CD4-positive, alpha-beta T cell (primary cell): ENCODE measurements at regions of chr11 and their contacts with region 1.

Region 1: GRCh38 chr11:117946842-117947526 is 17.8 kb upstream of the TMPRSS13 start:
- DNase-seq: peak; percentile 66 to 90 (median 79)
- ATAC-seq: no peak
- H3K4me3 ChIP-seq: no peak overlapping the region
- H3K4me3 Mint-ChIP-seq: peak overlapping the region; percentile 67
- H3K27ac ChIP-seq: no peak overlapping the region
- H3K27ac Mint-ChIP-seq: peak overlapping the region; percentile 86
- H3K4me1 ChIP-seq: peaks cover 69% of the 10 kb centered on the region
- H3K4me1 Mint-ChIP-seq: peaks cover 71% of the 10 kb centered on the region
- H3K27me3 ChIP-seq: no peaks in the 10 kb centered on the region
- H3K27me3 Mint-ChIP-seq: no peaks in the 10 kb centered on the region
- CTCF ChIP-seq: peak; percentile 88

Region 2: GRCh38 chr11:117817368-117818040 is 129.5 kb before region 1 on chr11:
- CTCF ChIA-PET with region 1: interaction called, 12 read pairs
- POLR2A ChIA-PET with region 1: interaction called, 21 read pairs
- intact Hi-C with region 1: loop called in 1 of 2 experiments (anchors 5 kb)
- DNase-seq: peak; percentile 70 to 92 (median 84)
- ATAC-seq: peak; percentile 16
- H3K4me3 ChIP-seq: no peak overlapping the region
- H3K4me3 Mint-ChIP-seq: peak overlapping the region; percentile 38
- H3K27ac ChIP-seq: no peak overlapping the region
- H3K27ac Mint-ChIP-seq: peak overlapping the region; percentile 87
- H3K4me1 ChIP-seq: peaks cover 67% of the 10 kb centered on the region
- H3K4me1 Mint-ChIP-seq: peaks cover 50% of the 10 kb centered on the region
- H3K27me3 ChIP-seq: no peaks in the 10 kb centered on the region
- H3K27me3 Mint-ChIP-seq: no peaks in the 10 kb centered on the region
- CTCF ChIP-seq: peak; percentile 97

Region 3: GRCh38 chr11:117970400-117971024 is 23.5 kb after region 1 on chr11:
- CTCF ChIA-PET with region 1: interaction called, 8 read pairs
- POLR2A ChIA-PET with region 1: interaction called, 11 read pairs
- intact Hi-C with region 1: no loop called
- DNase-seq: peak in 5 of 14 experiments; percentile 33 to 79 (median 71)
- ATAC-seq: peak; percentile 79
- H3K4me3 ChIP-seq: no peak overlapping the region
- H3K4me3 Mint-ChIP-seq: peak overlapping the region; percentile 44
- H3K27ac ChIP-seq: no peak overlapping the region
- H3K27ac Mint-ChIP-seq: peak overlapping the region; percentile 42
- H3K4me1 ChIP-seq: peaks cover 59% of the 10 kb centered on the region
- H3K4me1 Mint-ChIP-seq: peaks cover 69% of the 10 kb centered on the region
- H3K27me3 ChIP-seq: no peaks in the 10 kb centered on the region
- H3K27me3 Mint-ChIP-seq: no peaks in the 10 kb centered on the region
- CTCF ChIP-seq: no peak

Region 4: GRCh38 chr11:118002541-118003423 is 55.8 kb after region 1 on chr11:
- CTCF ChIA-PET with region 1: interaction called, 7 read pairs
- POLR2A ChIA-PET with region 1: interaction called, 273 read pairs
- intact Hi-C with region 1: loop called in 1 of 2 experiments (anchors 5 kb)
- DNase-seq: peak in 10 of 14 experiments; percentile 29 to 70 (median 48)
- ATAC-seq: peak; percentile 48
- H3K4me3 ChIP-seq: peak overlapping the region; percentile 10
- H3K4me3 Mint-ChIP-seq: peak overlapping the region; percentile 82
- H3K27ac ChIP-seq: peak overlapping the region; percentile 72 to 76
- H3K27ac Mint-ChIP-seq: peak overlapping the region; percentile 84
- H3K4me1 ChIP-seq: peaks cover 99% of the 10 kb centered on the region
- H3K4me1 Mint-ChIP-seq: peaks cover 92% of the 10 kb centered on the region
- H3K27me3 ChIP-seq: no peaks in the 10 kb centered on the region
- H3K27me3 Mint-ChIP-seq: no peaks in the 10 kb centered on the region
- CTCF ChIP-seq: no peak

Region 5: DNA sequence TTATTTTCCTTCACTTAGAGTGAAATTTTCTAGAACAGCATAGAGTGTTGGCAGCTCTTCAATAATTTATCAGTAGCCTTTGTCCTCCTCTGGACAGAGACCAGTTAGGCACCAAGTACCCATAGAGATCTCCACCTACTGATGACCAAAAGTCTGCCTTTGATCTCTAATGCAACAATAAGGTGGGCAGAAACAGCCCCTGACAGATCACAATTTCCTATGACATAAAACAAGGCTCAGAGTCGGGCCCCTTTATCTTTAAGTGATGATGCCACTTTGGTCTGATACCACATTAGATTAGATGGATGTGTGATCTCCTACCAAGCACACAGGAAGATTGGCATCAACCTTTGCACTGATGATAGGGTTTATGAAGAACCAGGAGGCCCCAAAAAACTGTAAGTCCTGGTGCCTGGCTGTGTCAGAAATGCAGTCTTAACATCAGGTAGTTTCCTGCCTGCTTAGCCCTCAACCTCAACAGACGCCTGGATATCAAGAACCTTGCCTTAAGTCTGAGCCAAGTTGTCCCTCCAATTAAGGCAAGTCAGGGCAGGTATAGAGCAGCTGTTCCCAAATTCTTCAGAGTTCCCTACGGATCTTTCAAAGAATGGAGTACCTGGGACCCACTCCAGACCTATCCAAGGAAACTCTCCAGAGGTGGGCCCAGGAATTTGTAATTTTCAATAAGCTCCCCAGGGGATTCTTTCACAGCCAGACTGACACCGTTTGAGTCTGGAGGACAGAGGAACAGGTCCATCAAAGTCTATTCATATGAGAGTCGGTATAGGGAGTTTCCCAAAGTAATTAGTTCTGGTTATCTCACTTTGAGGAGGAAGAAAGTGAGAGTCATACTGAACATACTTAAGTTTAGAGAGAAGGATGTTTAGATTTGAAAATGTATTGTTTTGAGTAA is 99.3 kb after region 1 on chr11:
- CTCF ChIA-PET with region 1: interaction called, 78 read pairs
- POLR2A ChIA-PET with region 1: interaction called, 156 read pairs
- intact Hi-C with region 1: loop called in 1 of 2 experiments (anchors 1 kb)
- DNase-seq: peak in 11 of 14 experiments; percentile 25 to 84 (median 44)
- ATAC-seq: peak; percentile 83
- H3K4me3 ChIP-seq: no peak overlapping the region
- H3K4me3 Mint-ChIP-seq: peak overlapping the region; percentile 69
- H3K27ac ChIP-seq: peak overlapping the region; percentile 71 to 76
- H3K27ac Mint-ChIP-seq: peak overlapping the region; percentile 95
- H3K4me1 ChIP-seq: peaks cover 80% of the 10 kb centered on the region
- H3K4me1 Mint-ChIP-seq: peaks cover 93% of the 10 kb centered on the region
- H3K27me3 ChIP-seq: no peaks in the 10 kb centered on the region
- H3K27me3 Mint-ChIP-seq: no peaks in the 10 kb centered on the region
- CTCF ChIP-seq: no peak

Region 6: GRCh38 chr11:118471030-118471429 is 524.0 kb after region 1 on chr11:
- CTCF ChIA-PET with region 1: no interaction called
- POLR2A ChIA-PET with region 1: no interaction called
- intact Hi-C with region 1: no loop called
- DNase-seq: no peak
- ATAC-seq: no peak
- H3K4me3 ChIP-seq: no peak overlapping the region
- H3K4me3 Mint-ChIP-seq: no peak overlapping the region
- H3K27ac ChIP-seq: no peak overlapping the region
- H3K27ac Mint-ChIP-seq: peak overlapping the region; percentile 74
- H3K4me1 ChIP-seq: peaks cover 4% of the 10 kb centered on the region
- H3K4me1 Mint-ChIP-seq: peaks cover 46% of the 10 kb centered on the region
- H3K27me3 ChIP-seq: no peaks in the 10 kb centered on the region
- H3K27me3 Mint-ChIP-seq: no peaks in the 10 kb centered on the region
- CTCF ChIP-seq: no peak